PC-3 (cell line): ENCODE measurements at regions of chr18 and their contacts with region 1.

Region 1: GRCh38 chr18:47883771-47884413 is 46.6 kb downstream of the SMAD2 start:
- DNase-seq: peak; percentile 51
- ATAC-seq: peak; percentile 12
- H3K4me3 ChIP-seq: no peak overlapping the region
- H3K27ac ChIP-seq: peak overlapping the region; percentile 89
- H3K4me1 ChIP-seq: peaks cover 37% of the 10 kb centered on the region
- H3K27me3 ChIP-seq: no peaks in the 10 kb centered on the region
- CTCF ChIP-seq: no peak

Region 2: DNA sequence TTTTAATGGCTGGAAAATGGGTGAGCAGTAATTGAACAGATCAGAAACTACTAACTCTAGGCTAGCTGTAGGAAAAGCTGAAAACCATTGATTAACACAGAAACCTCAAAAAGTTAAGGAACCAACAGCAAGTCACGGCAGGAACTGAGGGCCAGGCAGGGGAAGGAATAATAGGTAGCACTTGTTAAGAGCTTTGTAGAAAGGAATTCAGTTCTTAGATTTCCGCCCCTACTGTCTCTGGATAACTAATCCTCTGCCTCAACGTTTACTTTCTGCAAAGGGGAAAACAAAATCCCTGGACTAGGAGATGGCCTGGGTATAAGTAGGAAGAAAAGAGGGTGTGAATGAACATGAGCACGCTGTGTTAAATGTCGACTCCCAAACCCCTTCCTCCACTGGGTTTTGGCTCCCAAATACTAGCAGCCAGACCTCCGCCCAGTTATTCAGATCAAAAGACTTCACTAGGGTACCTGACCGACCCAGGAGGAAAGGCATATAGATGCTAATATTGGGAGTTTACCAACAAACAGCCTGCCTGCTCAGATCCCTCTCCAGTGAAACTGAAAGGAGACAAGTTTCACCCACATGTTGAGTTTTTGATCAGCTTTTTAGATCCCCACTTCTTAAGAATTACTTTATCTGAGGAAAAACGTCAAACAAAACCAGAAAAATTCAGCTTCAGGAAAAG is 34.2 kb after region 1 on chr18:
- CTCF ChIA-PET with region 1: no interaction called
- POLR2A ChIA-PET with region 1: no interaction called
- intact Hi-C with region 1: loop called (anchors 5 kb)
- DNase-seq: no peak
- ATAC-seq: no peak
- H3K4me3 ChIP-seq: no peak overlapping the region
- H3K27ac ChIP-seq: no peak overlapping the region
- H3K4me1 ChIP-seq: peaks cover 21% of the 10 kb centered on the region
- H3K27me3 ChIP-seq: no peaks in the 10 kb centered on the region
- CTCF ChIP-seq: no peak